ENCODE measurements at regions of chr22 and their contacts with region 1.

Region 1: GRCh38 chr22:24289741-24290163 is 19.1 kb downstream of the SPECC1L start:
- DNase-seq: no peak

Region 2: DNA sequence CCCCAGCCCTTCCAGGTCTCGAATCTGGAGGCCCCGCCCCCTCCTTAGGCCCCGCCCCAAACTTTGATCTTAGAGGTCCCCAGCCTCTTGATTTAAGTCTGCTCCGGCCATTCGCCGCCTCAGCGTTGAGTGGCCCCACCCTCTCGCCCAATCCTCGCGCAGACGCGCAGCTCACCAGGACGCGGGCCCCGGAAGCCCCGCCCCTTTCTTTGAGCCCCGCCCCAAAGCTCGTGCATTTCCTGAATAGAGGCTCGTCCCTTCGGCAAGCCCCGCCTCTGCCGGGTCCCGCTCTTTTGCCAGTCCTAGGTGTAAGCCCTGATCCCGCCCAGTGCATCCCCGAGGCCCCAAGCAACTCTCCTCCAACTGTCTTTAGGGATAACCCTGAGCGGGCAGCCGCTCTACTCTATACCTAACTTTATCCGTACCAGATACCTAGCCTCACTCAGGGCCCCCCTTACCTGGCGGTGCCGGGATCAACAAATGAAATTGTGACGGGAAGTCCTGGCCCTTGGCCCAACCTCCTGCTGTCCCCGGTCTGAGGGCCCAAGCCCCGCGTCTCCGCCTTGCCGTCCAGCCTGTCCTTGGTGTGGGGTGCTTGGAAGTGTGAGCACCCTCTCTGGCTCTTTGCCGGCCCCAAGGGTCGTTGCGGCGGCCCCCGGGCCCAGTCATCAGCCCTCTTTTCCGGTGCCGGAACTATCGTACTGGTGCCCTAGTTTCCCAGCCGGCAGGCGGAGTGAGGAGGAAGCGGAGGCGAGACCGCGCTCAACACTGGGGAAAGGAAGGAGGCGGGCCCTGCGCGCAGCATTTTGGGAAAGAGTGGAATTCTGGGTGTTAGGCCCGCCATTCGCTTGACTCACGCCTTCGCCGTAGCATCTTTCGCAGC is 265.6 kb after region 1 on chr22 and contains the start of gene SNRPD3:
- in situ Hi-C with region 1: no loop called
- DNase-seq: peak; percentile 98

Region 3: DNA sequence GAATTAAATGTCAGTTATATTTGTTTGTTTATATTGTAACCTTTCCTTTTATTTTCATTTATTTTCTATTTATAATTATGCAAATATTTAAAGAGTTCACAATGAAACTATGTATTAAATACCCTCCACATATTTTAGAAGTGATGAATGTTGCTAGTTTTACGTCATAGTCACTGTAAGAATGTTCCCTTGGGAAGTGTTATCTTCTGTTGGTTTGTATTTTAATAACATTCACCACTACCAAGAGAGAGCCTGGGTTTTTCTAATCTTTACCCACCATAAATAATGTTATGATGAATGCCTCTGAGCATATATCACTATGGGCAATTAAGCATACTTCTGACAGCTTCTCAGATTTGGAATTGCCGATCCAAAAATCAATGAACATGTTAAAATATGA is 393.9 kb after region 1 on chr22:
- in situ Hi-C with region 1: loop called (anchors 10 kb)
- DNase-seq: no peak